Activated naive CD4-positive, alpha-beta T cell treated with anti-CD3 and anti-CD28 coated beads for 36 hours (primary cell): ENCODE measurements at regions of chr16 and their contacts with region 1.

Region 1: GRCh38 chr16:58129097-58129936 is at the start of gene CFAP20:
- DNase-seq: peak; percentile 98
- H3K4me3 Mint-ChIP-seq: peak within 1 kb of the TSS; percentile 96
- H3K27ac Mint-ChIP-seq: peak within 1 kb of the TSS; percentile 91
- H3K4me1 Mint-ChIP-seq: peaks cover 40% of the 10 kb centered on the region
- H3K27me3 Mint-ChIP-seq: no peaks in the 10 kb centered on the region
- total RNA-seq, gene CFAP20: 31.2 to 31.4 TPM

Region 2: GRCh38 chr16:57734925-57735754 is 394.2 kb before region 1 on chr16:
- CTCF ChIA-PET with region 1: no interaction called
- intact Hi-C with region 1: loop called (anchors 1 kb)
- DNase-seq: peak; percentile 98
- H3K4me3 Mint-ChIP-seq: peak overlapping the region; percentile 91
- H3K27ac Mint-ChIP-seq: peak overlapping the region; percentile 96
- H3K4me1 Mint-ChIP-seq: peaks cover 19% of the 10 kb centered on the region
- H3K27me3 Mint-ChIP-seq: no peaks in the 10 kb centered on the region

Region 3: DNA sequence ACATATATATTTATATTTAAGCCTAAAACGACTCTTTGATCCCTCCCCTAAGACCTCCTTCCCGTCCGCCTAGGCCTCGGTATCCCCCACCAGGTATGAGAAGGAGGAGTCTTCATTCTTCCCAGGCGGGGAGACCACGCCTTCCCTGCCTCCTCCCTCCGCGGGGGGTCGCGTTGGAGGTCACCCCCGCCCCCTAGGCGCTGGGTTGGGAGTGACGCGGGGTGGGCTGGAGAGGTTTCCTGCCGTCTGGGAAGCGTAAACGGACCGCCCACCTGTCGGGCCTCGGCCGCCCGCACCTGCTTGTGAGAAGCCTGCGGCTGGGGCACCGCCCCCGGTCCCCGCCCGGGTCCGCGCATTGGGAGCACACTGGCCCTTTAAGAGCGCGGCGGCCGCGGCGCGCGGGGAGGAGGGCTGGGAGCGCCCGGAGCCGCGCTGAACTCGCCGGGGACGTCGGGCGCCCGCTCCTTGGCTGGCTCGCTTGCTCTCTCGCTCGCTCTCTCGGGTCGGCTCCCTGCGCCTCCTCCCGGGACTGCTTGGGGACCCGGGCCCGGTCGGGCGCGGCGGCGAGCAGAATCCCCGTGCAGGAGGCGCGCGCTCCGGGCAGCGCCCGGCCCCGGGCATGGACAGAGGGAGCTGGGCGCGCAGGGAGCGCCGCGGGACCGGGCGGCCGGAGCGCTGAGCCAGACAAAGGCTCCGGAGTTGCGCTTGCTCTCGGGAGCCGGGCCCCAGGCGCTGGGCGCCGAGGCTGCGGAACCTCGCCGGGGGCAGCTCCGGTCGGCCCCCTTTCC is 103.8 kb before region 1 on chr16 and contains the start of gene MMP15:
- CTCF ChIA-PET with region 1: interaction called, 5 read pairs
- intact Hi-C with region 1: loop called (anchors 1 kb)
- DNase-seq: peak; percentile 60
- H3K4me3 Mint-ChIP-seq: peak within 1 kb of the TSS; percentile 79
- H3K27ac Mint-ChIP-seq: no peak within 1 kb of the TSS
- H3K4me1 Mint-ChIP-seq: peaks cover 10% of the 10 kb centered on the region
- H3K27me3 Mint-ChIP-seq: no peaks in the 10 kb centered on the region
- total RNA-seq, gene MMP15: 0.12 to 0.24 TPM

Region 4: GRCh38 chr16:58236231-58236690 is 106.9 kb after region 1 on chr16:
- CTCF ChIA-PET with region 1: no interaction called
- intact Hi-C with region 1: loop called (anchors 5 kb)
- DNase-seq: peak; percentile 84
- H3K4me3 Mint-ChIP-seq: peak overlapping the region; percentile 86
- H3K27ac Mint-ChIP-seq: no peak overlapping the region
- H3K4me1 Mint-ChIP-seq: peaks cover 5% of the 10 kb centered on the region
- H3K27me3 Mint-ChIP-seq: peaks cover 11% of the 10 kb centered on the region

Region 5: GRCh38 chr16:58494981-58495520 is 365.7 kb after region 1 on chr16:
- CTCF ChIA-PET with region 1: no interaction called
- intact Hi-C with region 1: loop called (anchors 1 kb)
- DNase-seq: peak; percentile 94
- H3K4me3 Mint-ChIP-seq: no peak overlapping the region
- H3K27ac Mint-ChIP-seq: no peak overlapping the region
- H3K4me1 Mint-ChIP-seq: peaks cover 9% of the 10 kb centered on the region
- H3K27me3 Mint-ChIP-seq: no peaks in the 10 kb centered on the region

Region 6: DNA sequence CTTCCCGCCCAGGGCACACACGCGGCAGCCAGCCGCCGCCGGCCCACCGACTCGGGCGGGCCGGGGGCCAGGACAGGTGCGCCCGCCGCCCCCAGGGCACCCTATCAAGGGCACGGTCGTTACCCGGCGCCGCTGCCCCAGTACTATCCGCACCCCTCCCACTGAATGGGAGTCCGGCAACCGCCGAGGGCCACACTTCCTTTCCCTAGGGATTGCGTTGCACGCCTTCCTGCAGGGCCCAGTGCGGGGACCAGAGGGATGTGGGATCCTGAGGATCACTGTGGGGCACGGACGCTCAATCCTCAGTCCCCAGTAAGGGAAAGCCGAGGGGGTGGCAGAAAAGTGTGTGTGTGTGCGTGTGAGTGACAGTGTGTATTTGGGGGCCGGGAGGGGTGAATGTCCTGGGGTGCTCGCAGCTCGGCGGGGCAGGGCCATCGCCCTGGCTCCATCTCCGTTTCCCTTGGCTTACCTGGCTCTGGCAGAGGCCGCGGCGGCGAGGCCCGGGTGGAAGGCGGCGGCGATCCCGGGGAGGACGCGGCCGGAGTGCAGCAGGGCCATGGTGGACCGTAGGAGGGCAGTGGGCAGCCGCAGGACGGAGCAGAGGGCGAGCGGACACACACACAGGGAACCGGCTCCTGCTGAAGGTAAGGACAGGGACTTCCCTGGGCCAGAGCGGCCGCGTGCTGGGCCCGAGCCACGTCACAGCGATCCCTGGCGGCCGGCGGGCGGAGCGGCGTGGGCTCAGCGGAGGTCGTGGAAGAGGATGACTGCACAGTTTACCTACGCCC is 604.5 kb after region 1 on chr16 and contains the start of gene GOT2:
- CTCF ChIA-PET with region 1: no interaction called
- intact Hi-C with region 1: loop called (anchors 2 kb)
- DNase-seq: peak; percentile 83
- H3K4me3 Mint-ChIP-seq: peak within 1 kb of the TSS; percentile 95
- H3K27ac Mint-ChIP-seq: peak within 1 kb of the TSS; percentile 84
- H3K4me1 Mint-ChIP-seq: peaks cover 42% of the 10 kb centered on the region
- H3K27me3 Mint-ChIP-seq: no peaks in the 10 kb centered on the region
- total RNA-seq, gene GOT2: 156 to 162 TPM